ENCODE measurements at regions of chr20 and their contacts with region 1.

Region 1: DNA sequence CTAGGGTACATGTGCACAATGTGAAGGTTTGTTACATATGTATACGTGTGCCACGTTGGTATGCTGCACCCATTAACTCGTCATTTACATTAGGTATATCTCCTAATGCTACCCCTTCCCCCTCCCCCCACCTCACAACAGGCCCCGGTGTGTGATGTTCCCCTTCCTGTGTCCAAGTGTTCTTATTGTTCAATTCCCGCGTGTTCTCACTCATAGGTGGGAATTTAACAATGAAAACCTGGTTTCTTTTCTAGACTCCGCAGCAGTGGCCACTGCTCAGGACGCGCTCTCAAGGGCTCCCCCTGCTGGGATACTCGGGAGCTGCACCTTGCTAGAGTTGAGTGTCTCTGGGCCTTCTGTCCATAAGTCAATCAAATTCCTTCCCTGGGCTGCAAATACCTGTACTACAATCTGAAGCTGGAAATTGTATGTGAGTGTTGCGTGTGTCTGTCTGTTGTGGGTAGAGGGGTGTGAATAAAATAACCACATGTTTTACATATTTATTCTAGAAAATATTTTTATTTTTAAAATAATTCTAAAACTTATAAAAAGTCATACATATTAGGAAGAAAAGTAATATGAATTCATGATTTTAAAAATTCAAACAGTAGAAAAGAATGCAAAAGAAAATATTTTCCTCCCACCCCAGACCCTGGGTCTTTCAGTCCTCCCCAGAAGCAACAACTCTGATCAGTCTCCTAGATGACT is 8.2 kb upstream of the CEP250 start:
- DNase-seq: peak; percentile 74
- H3K4me3 ChIP-seq: peak overlapping the region in 1 of 2 experiments; percentile 44; a peak in 1 of 4 replicates
- H3K27ac ChIP-seq: no peak overlapping the region
- H3K4me1 ChIP-seq: peaks cover 4 to 11% of the 10 kb centered on the region in 2 experiments; a peak in 3 of 4 replicates
- H3K27me3 ChIP-seq: no peaks in the 10 kb centered on the region
- CTCF ChIP-seq: peak; percentile 92
- EP300 ChIP-seq: no peak
- RAD21 ChIP-seq: peak; percentile 69

Region 2: GRCh38 chr20:35432430-35432735 is 14.9 kb before region 1 on chr20:
- CTCF ChIA-PET with region 1: interaction called, 24 read pairs
- POLR2A ChIA-PET with region 1: interaction called, 3 read pairs
- DNase-seq: no peak
- H3K4me3 ChIP-seq: no peak overlapping the region
- H3K27ac ChIP-seq: no peak overlapping the region
- H3K4me1 ChIP-seq: no peaks in the 10 kb centered on the region
- H3K27me3 ChIP-seq: no peaks in the 10 kb centered on the region
- CTCF ChIP-seq: no peak
- EP300 ChIP-seq: no peak
- RAD21 ChIP-seq: no peak

Measured in SK-N-SH (cell line).